Caco-2 (cell line): ENCODE measurements at regions of chr1 and their contacts with region 1.

Region 1: DNA sequence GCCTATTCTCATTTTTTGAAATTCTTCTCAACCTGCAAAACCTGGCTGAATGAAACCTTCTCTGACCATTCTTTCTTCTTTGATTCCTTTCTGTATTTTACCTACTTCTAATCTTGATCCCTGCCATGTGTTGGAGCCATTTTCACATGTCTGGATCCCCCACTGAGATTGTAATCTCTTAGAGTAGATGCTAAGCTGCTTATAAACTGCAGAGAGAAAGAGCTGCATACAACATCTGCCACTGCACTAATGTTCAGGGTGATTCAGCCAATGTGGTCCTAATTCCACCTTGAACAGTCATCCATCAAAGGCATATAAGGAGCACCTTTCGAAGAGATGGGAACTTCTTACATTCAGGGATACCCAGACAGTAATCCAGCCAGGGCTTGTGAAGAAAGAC is 16.2 kb upstream of the DAB1 start:
- DNase-seq: no peak
- H3K4me3 ChIP-seq: no peak overlapping the region
- H3K4me3 Mint-ChIP-seq: no peak overlapping the region
- H3K27ac Mint-ChIP-seq: no peak overlapping the region
- H3K4me1 ChIP-seq: no peaks in the 10 kb centered on the region
- H3K4me1 Mint-ChIP-seq: no peaks in the 10 kb centered on the region
- H3K27me3 ChIP-seq: no peaks in the 10 kb centered on the region
- H3K27me3 Mint-ChIP-seq: peaks cover 14% of the 10 kb centered on the region
- CTCF ChIP-seq: no peak

Region 2: DNA sequence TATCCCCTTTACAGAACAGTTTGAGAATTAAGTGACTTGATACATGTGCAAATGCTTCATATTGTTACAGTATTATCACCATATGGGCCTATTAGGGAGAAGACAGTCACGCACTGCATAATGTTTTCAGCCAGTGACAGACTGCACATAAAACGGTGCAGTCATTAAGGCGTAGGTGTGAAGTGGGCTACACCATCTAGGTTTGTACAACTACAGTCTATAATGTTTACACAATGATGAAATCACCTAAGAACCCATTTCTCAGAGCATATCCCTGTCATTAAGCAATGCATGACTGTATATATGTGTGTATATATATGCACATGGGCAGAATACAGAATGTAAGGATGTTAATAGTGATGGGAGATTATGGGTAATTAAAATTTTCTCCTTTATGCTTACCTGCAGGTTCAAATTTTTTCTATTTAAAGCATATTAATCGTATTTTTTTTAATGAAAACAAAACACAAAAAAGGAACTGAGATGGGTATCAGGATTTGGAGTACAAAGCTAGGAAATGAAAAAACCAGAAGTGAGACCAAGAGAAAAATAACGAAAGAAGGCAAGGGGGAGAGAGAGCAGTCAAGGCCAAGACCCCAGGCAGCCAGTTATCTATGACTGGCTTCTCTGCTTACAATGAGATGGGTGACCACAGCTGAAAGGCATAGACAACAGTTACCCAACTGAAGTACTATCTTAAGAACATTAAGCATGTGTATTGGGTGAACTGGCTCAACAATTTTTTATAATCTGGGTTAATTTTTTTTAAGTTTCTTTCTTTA is 106.6 kb after region 1 on chr1:
- CTCF ChIA-PET with region 1: no interaction called
- POLR2A ChIA-PET with region 1: no interaction called
- intact Hi-C with region 1: no loop called
- DNase-seq: no peak
- H3K4me3 ChIP-seq: no peak overlapping the region
- H3K4me3 Mint-ChIP-seq: no peak overlapping the region
- H3K27ac Mint-ChIP-seq: no peak overlapping the region
- H3K4me1 ChIP-seq: no peaks in the 10 kb centered on the region
- H3K4me1 Mint-ChIP-seq: no peaks in the 10 kb centered on the region
- H3K27me3 ChIP-seq: no peaks in the 10 kb centered on the region
- H3K27me3 Mint-ChIP-seq: peaks cover 6% of the 10 kb centered on the region
- CTCF ChIP-seq: no peak

Region 3: GRCh38 chr1:57616921-57617320 is 176.8 kb after region 1 on chr1:
- CTCF ChIA-PET with region 1: interaction called, 13 read pairs
- POLR2A ChIA-PET with region 1: no interaction called
- intact Hi-C with region 1: no loop called
- DNase-seq: no peak
- H3K4me3 ChIP-seq: no peak overlapping the region
- H3K4me3 Mint-ChIP-seq: no peak overlapping the region
- H3K27ac Mint-ChIP-seq: no peak overlapping the region
- H3K4me1 ChIP-seq: no peaks in the 10 kb centered on the region
- H3K4me1 Mint-ChIP-seq: no peaks in the 10 kb centered on the region
- H3K27me3 ChIP-seq: no peaks in the 10 kb centered on the region
- H3K27me3 Mint-ChIP-seq: no peaks in the 10 kb centered on the region
- CTCF ChIP-seq: no peak

Region 4: GRCh38 chr1:58136387-58136786 is 696.3 kb after region 1 on chr1:
- CTCF ChIA-PET with region 1: no interaction called
- POLR2A ChIA-PET with region 1: no interaction called
- intact Hi-C with region 1: no loop called
- DNase-seq: no peak
- H3K4me3 ChIP-seq: no peak overlapping the region
- H3K4me3 Mint-ChIP-seq: no peak overlapping the region
- H3K27ac Mint-ChIP-seq: no peak overlapping the region
- H3K4me1 ChIP-seq: no peaks in the 10 kb centered on the region
- H3K4me1 Mint-ChIP-seq: no peaks in the 10 kb centered on the region
- H3K27me3 ChIP-seq: no peaks in the 10 kb centered on the region
- H3K27me3 Mint-ChIP-seq: peaks cover 4% of the 10 kb centered on the region
- CTCF ChIP-seq: no peak